ENCODE measurements at regions of chr12 and their contacts with region 1.

Region 1: GRCh38 chr12:48988030-48988649 is 10.0 kb downstream of the WNT1 start:
- DNase-seq: no peak
- H3K4me3 ChIP-seq: no peak overlapping the region
- H3K27ac ChIP-seq: no peak overlapping the region
- H3K4me1 ChIP-seq: peaks cover 0 to 8% (median 0%) of the 10 kb centered on the region in 3 donors
- H3K27me3 ChIP-seq: peaks cover 0 to 99% (median 0%) of the 10 kb centered on the region in 4 donors
- CTCF ChIP-seq: peak; percentile 60 to 87 (median 75)
- POLR2A ChIP-seq: no peak

Region 2: GRCh38 chr12:47819896-47820630 is 1168.1 kb before region 1 on chr12 and contains the start of gene HDAC7:
- intact Hi-C with region 1: no loop called
- DNase-seq: no peak
- H3K4me3 ChIP-seq: peak within 1 kb of the TSS; percentile 64 to 95 (median 82)
- H3K27ac ChIP-seq: peak within 1 kb of the TSS; percentile 96 to 99 (median 98)
- H3K4me1 ChIP-seq: peaks cover 78 to 93% (median 81%) of the 10 kb centered on the region in 3 donors
- H3K27me3 ChIP-seq: no peaks in the 10 kb centered on the region
- CTCF ChIP-seq: peak in 2 of 6 experiments; percentile 6 to 11
- POLR2A ChIP-seq: peak in 2 of 4 donors; percentile 77 to 91
- total RNA-seq, gene HDAC7: 19.8 to 37.2 (median 24.0) TPM

Region 3: DNA sequence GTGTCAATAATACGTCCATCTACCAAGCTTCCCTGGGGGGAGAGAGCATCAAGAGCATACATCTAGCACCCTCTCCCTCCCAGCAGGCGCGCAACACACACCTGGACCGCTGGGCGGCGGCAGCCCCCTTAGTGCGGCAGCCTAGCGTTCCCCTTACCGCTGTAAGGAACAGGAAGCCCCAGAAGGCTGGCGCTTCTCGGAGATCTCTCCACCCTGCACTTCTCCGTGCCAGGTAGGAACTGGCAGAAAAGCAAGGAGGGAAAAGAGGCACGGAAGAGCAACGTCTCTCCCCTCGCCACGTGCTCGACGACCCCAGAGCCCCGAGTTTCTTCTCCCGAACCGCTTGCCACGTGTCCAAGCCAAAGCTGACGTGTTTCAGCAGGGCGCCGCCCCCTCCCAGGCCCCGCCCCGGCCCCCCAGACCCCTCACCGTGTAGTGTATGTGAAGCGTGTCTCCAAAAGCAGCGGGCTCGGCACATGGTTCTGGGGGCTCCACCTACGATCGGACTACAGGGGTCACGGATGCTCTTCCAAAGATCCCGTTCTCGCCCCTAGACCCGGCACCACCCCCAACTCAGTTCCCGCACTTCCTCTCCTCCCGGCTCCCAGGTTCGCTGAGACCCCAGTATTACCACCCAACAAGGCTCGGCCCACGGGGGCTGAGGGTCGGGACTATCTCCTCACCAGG is 63.4 kb before region 1 on chr12:
- intact Hi-C with region 1: loop called (anchors 10 kb)
- DNase-seq: no peak
- H3K4me3 ChIP-seq: peak overlapping the region; percentile 78 to 97 (median 86)
- H3K27ac ChIP-seq: peak overlapping the region; percentile 77 to 82 (median 80)
- H3K4me1 ChIP-seq: peaks cover 4 to 20% (median 5%) of the 10 kb centered on the region in 3 donors
- H3K27me3 ChIP-seq: no peaks in the 10 kb centered on the region
- CTCF ChIP-seq: peak; percentile 51 to 69 (median 64)
- POLR2A ChIP-seq: peak in 1 of 4 donors; percentile 10

Region 4: GRCh38 chr12:49060237-49061156 is 72.4 kb after region 1 on chr12 and contains the start of gene KMT2D:
- intact Hi-C with region 1: no loop called
- DNase-seq: peak; percentile 48
- H3K4me3 ChIP-seq: peak within 1 kb of the TSS; percentile 85 to 99 (median 98)
- H3K27ac ChIP-seq: peak within 1 kb of the TSS; percentile 98 to 99 (median 98)
- H3K4me1 ChIP-seq: peaks cover 32 to 56% (median 33%) of the 10 kb centered on the region in 3 donors
- H3K27me3 ChIP-seq: no peaks in the 10 kb centered on the region
- CTCF ChIP-seq: peak in 4 of 6 experiments; percentile 32 to 67 (median 52)
- POLR2A ChIP-seq: peak in 3 of 4 donors; percentile 27 to 54 (median 29)
- total RNA-seq, gene KMT2D: 29.4 to 67.9 (median 47.9) TPM

Measured in esophagus squamous epithelium (tissue), 5 donors.